Prostate gland (tissue), 2 donors: ENCODE measurements at regions of chr1 and their contacts with region 1.

Region 1: DNA sequence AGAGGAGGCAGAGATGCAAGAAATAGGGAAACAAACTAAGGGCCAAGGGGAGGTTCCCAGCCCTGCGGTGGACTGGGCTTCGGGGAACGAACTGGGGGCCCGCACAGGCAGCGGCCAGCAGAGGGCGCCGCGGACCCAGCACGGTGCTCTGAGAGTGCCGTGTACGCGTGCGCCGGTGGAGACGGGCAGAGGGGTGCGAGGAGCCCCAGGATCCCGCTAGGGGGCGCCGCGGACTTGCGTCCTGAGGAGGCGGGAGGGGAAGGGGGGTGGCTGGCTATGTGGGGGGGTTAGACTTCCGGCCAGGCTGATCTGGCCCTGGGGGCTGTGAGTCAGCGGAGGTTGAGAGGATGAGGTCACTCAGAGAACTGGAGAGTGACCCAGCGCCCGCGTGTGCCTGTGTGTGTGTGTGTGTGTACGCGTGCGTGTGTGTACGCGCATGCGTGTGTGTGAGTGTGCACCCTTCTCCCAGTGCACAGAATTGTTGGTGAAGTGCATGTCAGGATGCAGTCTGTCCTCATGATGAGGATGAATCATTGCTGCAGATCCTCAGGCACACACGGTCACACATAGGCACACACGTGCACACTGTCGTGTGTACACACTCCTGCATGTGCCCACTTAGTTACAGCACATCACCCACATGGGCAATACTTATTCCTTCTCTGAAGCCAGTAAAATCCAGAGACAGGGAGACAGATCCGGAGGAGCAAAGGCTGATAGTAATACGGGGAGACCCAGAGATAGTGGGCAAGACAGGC is 17.0 kb downstream of the NES start:
- DNase-seq: peak; percentile 78
- H3K4me3 ChIP-seq: no peak overlapping the region
- H3K27ac ChIP-seq: peak overlapping the region; percentile 45 to 57
- H3K4me1 ChIP-seq: peaks cover 7% of the 10 kb centered on the region
- H3K27me3 ChIP-seq: no peaks in the 10 kb centered on the region
- CTCF ChIP-seq: peak; percentile 95 to 99 (median 97)
- POLR2A ChIP-seq: no peak

Region 2: DNA sequence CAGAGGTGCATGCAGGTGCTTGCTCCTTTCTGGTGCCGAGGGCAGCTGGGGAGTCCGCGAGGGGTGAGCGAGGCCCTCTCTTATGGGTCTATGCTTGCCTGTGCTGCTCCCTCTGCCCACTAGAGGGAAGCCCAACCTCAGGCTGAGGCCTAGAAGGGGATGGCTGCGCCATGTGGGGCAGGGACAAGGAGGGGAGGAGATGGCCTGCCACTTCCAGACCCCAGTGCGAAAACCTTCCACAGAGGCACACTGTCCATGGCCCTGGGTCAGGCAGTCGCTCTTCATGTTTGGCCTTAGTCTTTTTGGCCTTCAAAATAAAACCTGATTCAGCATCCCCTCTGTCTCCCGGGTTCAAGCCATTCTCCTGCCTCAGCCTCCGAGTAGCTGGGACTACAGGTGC is 277.1 kb before region 1 on chr1:
- intact Hi-C with region 1: loop called (anchors 5 kb)
- DNase-seq: peak; percentile 32
- H3K4me3 ChIP-seq: no peak overlapping the region
- H3K27ac ChIP-seq: no peak overlapping the region
- H3K4me1 ChIP-seq: no peaks in the 10 kb centered on the region
- H3K27me3 ChIP-seq: peaks cover 6% of the 10 kb centered on the region
- CTCF ChIP-seq: peak in 3 of 4 experiments; percentile 33 to 76 (median 61)
- POLR2A ChIP-seq: no peak

Region 3: DNA sequence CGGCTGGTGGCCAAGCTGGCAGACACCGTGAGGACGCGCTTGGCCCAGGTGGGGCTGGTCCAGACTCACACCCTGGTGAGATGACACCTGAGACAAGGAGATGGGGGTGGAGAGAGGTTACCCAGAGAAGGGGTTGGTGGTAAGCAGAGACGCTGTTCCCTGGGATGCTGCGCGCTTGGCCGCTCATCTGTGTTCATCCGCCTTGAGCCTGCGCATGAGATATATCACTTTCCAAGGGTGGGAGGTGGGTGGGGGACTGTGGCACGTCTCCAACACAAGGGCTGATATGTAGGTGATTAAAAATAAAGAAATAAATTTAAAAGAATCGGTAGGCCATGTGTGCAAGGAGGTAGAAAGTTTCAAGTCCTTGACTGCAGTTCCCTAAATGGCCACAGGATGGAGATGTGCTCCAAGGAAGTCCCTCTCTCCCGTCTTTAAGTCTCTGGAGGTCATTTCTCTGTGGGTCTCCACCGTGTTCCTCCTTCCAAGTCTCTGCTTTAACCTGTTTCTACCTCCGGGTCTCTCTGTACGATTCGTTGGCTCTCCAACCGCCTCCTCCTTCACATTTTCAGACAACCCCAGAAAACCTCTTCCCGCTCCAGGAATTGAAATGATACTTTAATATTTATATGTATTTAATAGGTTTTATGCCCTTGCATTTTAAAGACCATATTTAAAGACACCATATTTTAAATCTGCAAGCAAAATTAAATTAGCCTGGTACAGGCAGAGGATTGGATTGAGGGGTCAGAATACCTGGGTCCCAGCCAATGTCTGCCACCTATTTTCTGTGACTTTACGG is 76.2 kb before region 1 on chr1:
- intact Hi-C with region 1: loop called (anchors 2 kb)
- DNase-seq: peak; percentile 74
- H3K4me3 ChIP-seq: no peak overlapping the region
- H3K27ac ChIP-seq: no peak overlapping the region
- H3K4me1 ChIP-seq: no peaks in the 10 kb centered on the region
- H3K27me3 ChIP-seq: no peaks in the 10 kb centered on the region
- CTCF ChIP-seq: peak; percentile 88 to 93 (median 90)
- POLR2A ChIP-seq: no peak

Region 4: GRCh38 chr1:156625436-156626078 is 34.6 kb before region 1 on chr1:
- intact Hi-C with region 1: loop called (anchors 1 kb)
- DNase-seq: no peak
- H3K4me3 ChIP-seq: peak overlapping the region; percentile 25 to 29
- H3K27ac ChIP-seq: peak overlapping the region; percentile 58 to 71
- H3K4me1 ChIP-seq: peaks cover 7% of the 10 kb centered on the region
- H3K27me3 ChIP-seq: peaks cover 10% of the 10 kb centered on the region
- CTCF ChIP-seq: peak; percentile 34 to 80 (median 74)
- POLR2A ChIP-seq: no peak

Region 5: GRCh38 chr1:156677616-156678596 is 17.7 kb after region 1 on chr1:
- intact Hi-C with region 1: loop called (anchors 1 kb)
- DNase-seq: no peak
- H3K4me3 ChIP-seq: peak overlapping the region; percentile 27 to 33
- H3K27ac ChIP-seq: peak overlapping the region; percentile 60 to 74
- H3K4me1 ChIP-seq: peaks cover 4% of the 10 kb centered on the region
- H3K27me3 ChIP-seq: peaks cover 5% of the 10 kb centered on the region
- CTCF ChIP-seq: peak; percentile 22 to 84 (median 74)
- POLR2A ChIP-seq: no peak